CD8-positive, alpha-beta T cell (primary cell): ENCODE measurements at regions of chr11 and their contacts with region 1.

Region 1: DNA sequence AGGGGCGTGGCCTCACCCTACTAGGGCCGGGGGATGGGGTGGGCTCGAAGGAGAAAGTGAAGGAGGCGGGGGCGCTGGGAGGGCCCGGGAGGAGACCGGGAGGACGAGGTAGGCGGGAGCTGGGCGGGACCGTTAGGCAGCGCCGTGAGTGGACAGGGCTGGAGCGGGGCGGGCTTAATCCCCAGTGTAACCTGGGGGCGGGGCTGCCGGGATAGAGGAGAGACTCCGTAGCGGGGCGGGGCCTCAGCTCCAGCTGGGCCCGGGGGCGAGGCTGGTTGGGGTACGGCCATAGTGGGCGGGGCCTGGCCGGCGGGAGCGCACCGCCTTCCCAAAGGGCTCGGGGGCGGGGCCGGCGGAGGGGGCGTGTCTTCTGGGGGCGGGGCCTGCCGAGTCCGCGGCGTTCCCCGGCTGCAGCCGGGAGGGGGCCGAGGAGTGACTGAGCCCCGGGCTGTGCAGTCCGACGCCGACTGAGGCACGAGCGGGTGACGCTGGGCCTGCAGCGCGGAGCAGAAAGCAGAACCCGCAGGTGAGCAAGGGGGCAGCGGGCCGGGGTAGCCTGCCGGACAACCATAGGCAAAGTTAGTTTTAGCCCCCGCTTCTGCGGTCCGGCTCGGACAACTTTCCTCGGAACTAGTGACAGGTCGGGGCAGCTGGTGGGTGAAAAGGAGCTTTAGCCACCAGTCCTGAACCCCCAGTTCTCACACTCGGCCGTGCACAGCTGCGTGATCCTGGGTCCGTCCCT is at the start of gene CD82:
- DNase-seq: peak; percentile 88 to 98 (median 95)
- ATAC-seq: peak; percentile 73
- H3K4me3 ChIP-seq: peak within 1 kb of the TSS; percentile 86 to 89
- H3K4me3 Mint-ChIP-seq: peak within 1 kb of the TSS; percentile 82
- H3K27ac ChIP-seq: peak within 1 kb of the TSS; percentile 33 to 71
- H3K27ac Mint-ChIP-seq: peak within 1 kb of the TSS; percentile 82
- H3K4me1 ChIP-seq: peaks cover 47% of the 10 kb centered on the region
- H3K4me1 Mint-ChIP-seq: peaks cover 53% of the 10 kb centered on the region
- H3K27me3 ChIP-seq: no peaks in the 10 kb centered on the region
- H3K27me3 Mint-ChIP-seq: no peaks in the 10 kb centered on the region
- CTCF ChIP-seq: peak; percentile 39
- total RNA-seq, gene CD82: 28.1 to 32.4 TPM

Region 2: DNA sequence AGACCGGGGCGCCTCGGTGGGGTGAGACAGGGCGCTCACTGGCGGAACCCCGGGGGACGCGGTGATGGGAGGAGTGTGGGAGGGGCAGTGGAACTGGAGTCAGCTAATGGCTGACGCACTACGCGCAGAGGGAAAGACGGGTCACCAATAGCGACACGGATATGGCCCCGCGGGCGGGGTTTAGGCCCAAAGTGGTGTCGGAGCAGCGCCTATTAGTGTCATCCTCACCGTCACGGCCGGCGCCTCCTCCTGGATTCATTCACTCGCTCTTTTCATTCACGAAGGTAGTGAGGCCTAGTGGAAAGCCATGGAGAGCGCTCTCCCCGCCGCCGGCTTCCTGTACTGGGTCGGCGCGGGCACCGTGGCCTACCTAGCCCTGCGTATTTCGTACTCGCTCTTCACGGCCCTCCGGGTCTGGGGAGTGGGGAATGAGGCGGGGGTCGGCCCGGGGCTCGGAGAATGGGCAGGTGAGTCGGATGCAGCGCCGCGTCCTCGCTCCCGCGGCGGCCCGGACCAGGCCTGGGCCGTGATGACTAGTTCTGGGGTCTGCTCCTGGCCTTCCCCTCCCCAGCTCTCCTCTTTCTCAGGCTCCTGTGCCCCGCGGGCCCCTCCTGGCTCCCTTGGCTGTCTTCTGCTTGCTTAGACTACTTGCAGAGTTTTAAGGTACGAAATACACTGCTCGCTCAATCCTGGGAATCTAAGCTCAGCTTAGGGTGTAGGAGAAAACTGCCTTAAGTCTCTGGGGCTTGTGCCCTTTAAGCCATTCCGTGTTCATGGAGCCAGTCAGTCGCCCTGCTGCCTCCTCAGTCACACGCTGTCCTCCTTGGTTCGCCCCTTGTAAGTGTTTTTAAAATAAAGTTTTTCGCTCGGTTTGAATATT is 884.6 kb before region 1 on chr11 and contains the start of gene HSD17B12:
- CTCF ChIA-PET with region 1: no interaction called
- POLR2A ChIA-PET with region 1: no interaction called
- intact Hi-C with region 1: loop called (anchors 5 to 10 kb)
- DNase-seq: peak; percentile 98 to 100 (median 98)
- ATAC-seq: peak; percentile 94
- H3K4me3 ChIP-seq: peak within 1 kb of the TSS; percentile 84
- H3K4me3 Mint-ChIP-seq: peak within 1 kb of the TSS; percentile 89
- H3K27ac ChIP-seq: peak within 1 kb of the TSS; percentile 91 to 92
- H3K27ac Mint-ChIP-seq: peak within 1 kb of the TSS; percentile 98
- H3K4me1 ChIP-seq: peaks cover 15% of the 10 kb centered on the region
- H3K4me1 Mint-ChIP-seq: peaks cover 32% of the 10 kb centered on the region
- H3K27me3 ChIP-seq: no peaks in the 10 kb centered on the region
- H3K27me3 Mint-ChIP-seq: no peaks in the 10 kb centered on the region
- CTCF ChIP-seq: no peak
- total RNA-seq, gene HSD17B12: 13.8 to 14.0 TPM

Region 3: DNA sequence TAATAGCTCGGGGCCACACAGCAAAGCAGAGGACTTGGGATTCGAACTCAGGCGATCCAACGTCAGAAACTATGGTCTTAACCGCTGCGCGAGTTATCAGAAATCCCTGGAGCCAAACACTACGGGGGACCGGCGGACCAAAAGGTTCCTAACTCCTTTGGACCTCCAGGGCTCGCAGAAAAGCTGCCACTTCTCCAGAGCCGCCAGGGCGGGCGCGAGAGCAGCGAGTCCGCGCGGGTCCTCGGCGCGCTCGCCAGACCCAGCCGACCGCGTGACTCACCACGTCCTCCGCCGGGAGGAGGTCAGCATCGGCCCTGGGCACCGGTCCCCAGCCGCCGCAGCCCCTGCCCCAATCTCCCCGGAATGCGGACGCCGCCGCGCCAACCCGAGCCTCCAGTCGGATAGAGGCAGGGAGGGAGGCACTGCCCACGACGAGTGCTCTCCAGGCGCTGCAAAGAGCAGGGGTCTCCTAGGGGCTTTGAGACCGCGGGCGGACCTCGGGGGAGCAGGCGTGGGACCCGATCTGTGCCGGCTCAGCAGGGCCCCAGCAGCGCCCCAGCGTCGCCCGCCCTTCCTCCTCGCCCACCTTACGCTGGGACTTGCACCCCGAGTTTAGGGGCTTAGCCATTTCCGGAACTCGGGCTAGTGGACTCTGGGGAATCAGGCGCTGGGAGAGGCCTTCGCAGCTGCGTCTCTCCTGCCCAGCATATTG is 249.3 kb before region 1 on chr11:
- CTCF ChIA-PET with region 1: no interaction called
- POLR2A ChIA-PET with region 1: no interaction called
- intact Hi-C with region 1: no loop called
- DNase-seq: peak in 1 of 9 experiments; percentile 10
- ATAC-seq: no peak
- H3K4me3 ChIP-seq: no peak overlapping the region
- H3K4me3 Mint-ChIP-seq: peak overlapping the region; percentile 63
- H3K27ac ChIP-seq: no peak overlapping the region
- H3K27ac Mint-ChIP-seq: no peak overlapping the region
- H3K4me1 ChIP-seq: no peaks in the 10 kb centered on the region
- H3K4me1 Mint-ChIP-seq: peaks cover 16% of the 10 kb centered on the region
- H3K27me3 ChIP-seq: peaks cover 10 to 28% of the 10 kb centered on the region in 2 experiments
- H3K27me3 Mint-ChIP-seq: peaks cover 76% of the 10 kb centered on the region
- CTCF ChIP-seq: no peak

Region 4: DNA sequence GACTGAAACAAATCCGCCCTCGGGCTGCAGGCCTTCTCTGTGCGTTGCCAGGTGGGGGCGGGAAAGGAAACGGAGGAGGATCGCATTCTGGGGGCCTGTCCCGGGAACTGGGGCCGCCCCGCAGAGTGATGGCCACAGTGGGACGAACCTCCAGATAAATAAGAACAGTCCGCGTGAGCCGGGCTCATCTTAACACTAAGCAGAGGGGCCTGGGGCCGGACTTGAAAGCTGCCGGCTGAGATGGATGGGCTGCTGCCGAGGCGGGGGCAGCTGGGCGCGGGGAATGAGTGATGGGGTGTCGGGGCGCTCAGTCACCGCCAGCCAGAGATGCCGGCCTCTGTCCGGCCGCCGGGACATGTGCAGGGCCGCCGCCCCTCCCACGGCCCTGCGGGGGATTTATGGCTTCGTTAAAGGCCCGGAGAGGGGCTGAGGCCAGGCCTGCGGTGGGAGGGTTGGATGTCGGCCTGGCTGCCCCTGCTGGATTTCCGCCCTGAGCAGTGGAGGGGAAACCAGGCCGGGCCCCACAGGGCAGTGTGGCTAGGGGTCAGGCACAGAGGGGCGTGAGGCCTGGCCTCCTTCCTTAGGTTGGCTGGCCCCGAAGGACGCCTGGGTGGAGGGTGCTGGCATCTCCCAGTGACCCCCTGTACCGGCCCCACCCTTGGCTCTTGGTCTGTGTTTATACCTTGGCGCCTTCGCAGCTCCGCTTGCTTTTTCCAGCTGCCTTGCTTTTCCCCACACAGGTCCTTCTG is 45.2 kb before region 1 on chr11:
- CTCF ChIA-PET with region 1: interaction called, 3 read pairs
- POLR2A ChIA-PET with region 1: no interaction called
- intact Hi-C with region 1: loop called in 1 of 2 experiments (anchors 1 kb)
- DNase-seq: no peak
- ATAC-seq: no peak
- H3K4me3 ChIP-seq: no peak overlapping the region
- H3K4me3 Mint-ChIP-seq: no peak overlapping the region
- H3K27ac ChIP-seq: no peak overlapping the region
- H3K27ac Mint-ChIP-seq: no peak overlapping the region
- H3K4me1 ChIP-seq: no peaks in the 10 kb centered on the region
- H3K4me1 Mint-ChIP-seq: peaks cover 2% of the 10 kb centered on the region
- H3K27me3 ChIP-seq: no peaks in the 10 kb centered on the region
- H3K27me3 Mint-ChIP-seq: peaks cover 34% of the 10 kb centered on the region
- CTCF ChIP-seq: no peak

Region 5: GRCh38 chr11:44611687-44612434 is 46.5 kb after region 1 on chr11:
- CTCF ChIA-PET with region 1: interaction called, 625 read pairs
- POLR2A ChIA-PET with region 1: interaction called, 41 read pairs
- intact Hi-C with region 1: loop called in 1 of 2 experiments (anchors 1 kb)
- DNase-seq: peak; percentile 25 to 90 (median 79)
- ATAC-seq: peak; percentile 86
- H3K4me3 ChIP-seq: no peak overlapping the region
- H3K4me3 Mint-ChIP-seq: peak overlapping the region; percentile 42
- H3K27ac ChIP-seq: peak overlapping the region in 1 of 2 experiments; percentile 48
- H3K27ac Mint-ChIP-seq: peak overlapping the region; percentile 97
- H3K4me1 ChIP-seq: peaks cover 67% of the 10 kb centered on the region
- H3K4me1 Mint-ChIP-seq: peaks cover 66% of the 10 kb centered on the region
- H3K27me3 ChIP-seq: no peaks in the 10 kb centered on the region
- H3K27me3 Mint-ChIP-seq: no peaks in the 10 kb centered on the region
- CTCF ChIP-seq: no peak

Region 6: GRCh38 chr11:45354976-45355705 is 789.8 kb after region 1 on chr11:
- CTCF ChIA-PET with region 1: no interaction called
- POLR2A ChIA-PET with region 1: no interaction called
- intact Hi-C with region 1: loop called (anchors 1 to 5 kb)
- DNase-seq: peak; percentile 80 to 95 (median 89)
- ATAC-seq: peak; percentile 96
- H3K4me3 ChIP-seq: peak overlapping the region; percentile 66 to 72
- H3K4me3 Mint-ChIP-seq: peak overlapping the region; percentile 80
- H3K27ac ChIP-seq: peak overlapping the region; percentile 48 to 68
- H3K27ac Mint-ChIP-seq: peak overlapping the region; percentile 80
- H3K4me1 ChIP-seq: peaks cover 13% of the 10 kb centered on the region
- H3K4me1 Mint-ChIP-seq: peaks cover 14% of the 10 kb centered on the region
- H3K27me3 ChIP-seq: no peaks in the 10 kb centered on the region
- H3K27me3 Mint-ChIP-seq: peaks cover 5% of the 10 kb centered on the region
- CTCF ChIP-seq: no peak